Activated CD4-positive, alpha-beta T cell treated with anti-CD3 and anti-CD28 coated beads for 36 hours (primary cell): ENCODE measurements at regions of chr2 and their contacts with region 1.

Region 1: GRCh38 chr2:10122386-10123280 is at the start of gene RRM2:
- DNase-seq: peak; percentile 98
- ATAC-seq: peak; percentile 82
- H3K4me3 Mint-ChIP-seq: peak within 1 kb of the TSS; percentile 97
- H3K27ac Mint-ChIP-seq: peak within 1 kb of the TSS; percentile 98
- H3K4me1 Mint-ChIP-seq: peaks cover 37% of the 10 kb centered on the region
- H3K27me3 Mint-ChIP-seq: no peaks in the 10 kb centered on the region
- total RNA-seq, gene RRM2: 382 to 469 TPM

Region 2: GRCh38 chr2:9630749-9631483 is 491.7 kb before region 1 on chr2 and contains the start of gene YWHAQ:
- CTCF ChIA-PET with region 1: no interaction called
- POLR2A ChIA-PET with region 1: no interaction called
- intact Hi-C with region 1: loop called in 1 of 2 experiments (anchors 1 kb)
- DNase-seq: peak; percentile 97
- ATAC-seq: peak; percentile 89
- H3K4me3 Mint-ChIP-seq: peak within 1 kb of the TSS; percentile 99
- H3K27ac Mint-ChIP-seq: peak within 1 kb of the TSS; percentile 95
- H3K4me1 Mint-ChIP-seq: peaks cover 45% of the 10 kb centered on the region
- H3K27me3 Mint-ChIP-seq: no peaks in the 10 kb centered on the region
- total RNA-seq, gene YWHAQ: 370 to 508 TPM

Region 3: GRCh38 chr2:9951272-9951972 is 171.2 kb before region 1 on chr2 and contains the start of gene GRHL1:
- CTCF ChIA-PET with region 1: no interaction called
- POLR2A ChIA-PET with region 1: no interaction called
- intact Hi-C with region 1: loop called in 1 of 2 experiments (anchors 1 kb)
- DNase-seq: peak; percentile 95
- ATAC-seq: peak; percentile 98
- H3K4me3 Mint-ChIP-seq: peak within 1 kb of the TSS; percentile 68
- H3K27ac Mint-ChIP-seq: no peak within 1 kb of the TSS
- H3K4me1 Mint-ChIP-seq: peaks cover 4% of the 10 kb centered on the region
- H3K27me3 Mint-ChIP-seq: peaks cover 39% of the 10 kb centered on the region
- total RNA-seq, gene GRHL1: 0.27 to 0.53 TPM

Region 4: DNA sequence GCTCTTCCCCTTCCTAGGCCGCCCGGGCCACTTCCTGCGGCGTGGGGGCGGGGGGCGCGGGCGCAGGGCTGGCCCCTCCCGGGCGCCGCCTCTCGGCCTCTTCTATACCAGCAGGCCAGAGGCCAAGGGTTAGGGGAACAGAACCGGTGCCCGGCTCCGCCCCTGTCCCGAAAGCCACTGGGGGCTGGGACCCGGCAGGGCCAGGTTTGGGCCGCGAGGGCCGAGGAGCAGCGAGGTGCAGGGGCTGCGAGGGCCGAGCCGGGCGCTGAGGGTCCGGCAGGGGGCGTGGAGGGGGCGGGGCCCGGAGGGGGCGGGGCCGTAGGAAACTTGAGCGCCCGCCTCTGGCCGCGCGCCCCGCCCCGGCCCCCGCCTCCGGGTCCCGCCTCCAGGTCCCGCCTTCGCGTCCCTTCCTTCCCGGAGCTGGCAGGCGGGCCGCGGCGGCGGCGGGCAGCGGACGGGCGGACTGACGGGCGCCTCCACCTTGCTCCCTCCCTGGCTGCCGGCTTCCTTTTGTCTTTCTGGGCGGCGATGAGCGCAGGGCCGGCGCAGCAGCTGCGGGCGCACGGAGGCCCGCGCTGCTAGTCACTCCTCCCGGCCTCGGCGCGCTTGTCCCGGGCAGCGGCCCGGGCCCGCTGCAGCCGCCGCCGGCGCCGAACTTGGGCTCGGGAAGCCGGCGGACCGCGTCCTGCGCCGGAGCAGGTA is 180.0 kb after region 1 on chr2 and contains the start of gene HPCAL1:
- CTCF ChIA-PET with region 1: interaction called, 4 read pairs
- POLR2A ChIA-PET with region 1: interaction called, 3 read pairs
- intact Hi-C with region 1: loop called (anchors 1 kb)
- DNase-seq: peak; percentile 91
- ATAC-seq: peak; percentile 72
- H3K4me3 Mint-ChIP-seq: peak within 1 kb of the TSS; percentile 100
- H3K27ac Mint-ChIP-seq: peak within 1 kb of the TSS; percentile 89
- H3K4me1 Mint-ChIP-seq: peaks cover 65% of the 10 kb centered on the region
- H3K27me3 Mint-ChIP-seq: no peaks in the 10 kb centered on the region
- total RNA-seq, gene HPCAL1: 109 to 114 TPM

Region 5: GRCh38 chr2:10434886-10435819 is 312.5 kb after region 1 on chr2:
- CTCF ChIA-PET with region 1: interaction called, 22 read pairs
- POLR2A ChIA-PET with region 1: interaction called, 3 read pairs
- intact Hi-C with region 1: loop called in 1 of 2 experiments (anchors 1 kb)
- DNase-seq: peak; percentile 85
- ATAC-seq: peak; percentile 56
- H3K4me3 Mint-ChIP-seq: no peak overlapping the region
- H3K27ac Mint-ChIP-seq: no peak overlapping the region
- H3K4me1 Mint-ChIP-seq: peaks cover 11% of the 10 kb centered on the region
- H3K27me3 Mint-ChIP-seq: peaks cover 6% of the 10 kb centered on the region

Region 6: DNA sequence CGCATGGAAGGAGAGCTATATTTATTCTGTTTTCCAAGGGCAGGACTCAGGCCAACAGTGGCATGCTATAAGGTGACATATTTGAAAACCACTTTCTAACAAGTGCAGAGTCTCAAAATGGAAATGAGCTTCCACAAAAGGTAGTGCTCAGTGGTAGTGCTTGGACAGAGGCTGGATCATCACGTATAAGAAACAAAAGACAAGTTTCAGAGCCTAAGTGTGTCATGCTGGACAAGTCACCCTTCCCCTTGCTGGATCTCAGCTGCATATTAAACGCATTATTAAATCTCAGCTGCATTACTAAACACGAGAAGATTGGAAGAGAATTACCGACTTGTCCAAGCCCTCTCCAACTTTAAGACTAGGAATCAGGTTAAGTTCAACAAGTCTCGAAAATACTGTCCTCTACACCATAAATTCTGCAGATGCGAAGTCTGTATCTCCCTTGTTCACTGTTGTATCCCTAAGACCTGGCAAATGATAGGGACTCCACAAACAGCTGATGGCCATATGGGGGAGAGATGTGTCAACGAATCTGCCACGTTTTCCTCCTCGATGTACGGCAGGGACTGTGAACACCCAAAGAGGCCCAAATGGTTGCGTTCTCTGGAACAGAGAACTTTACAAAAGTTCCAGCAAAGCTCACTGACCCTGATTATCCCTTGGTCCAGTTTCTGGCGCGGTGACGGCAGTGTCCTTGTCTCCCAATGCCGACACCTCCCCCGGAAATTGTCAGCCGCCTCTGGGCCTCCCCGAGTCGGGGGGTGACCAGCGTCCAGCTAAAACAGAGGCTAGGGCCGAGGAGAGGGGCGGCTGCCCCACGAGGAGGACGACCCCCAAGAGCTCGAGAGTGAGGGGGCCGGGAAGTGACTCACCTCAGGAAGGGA is 566.5 kb after region 1 on chr2:
- CTCF ChIA-PET with region 1: no interaction called
- POLR2A ChIA-PET with region 1: no interaction called
- intact Hi-C with region 1: loop called in 1 of 2 experiments (anchors 5 kb)
- DNase-seq: no peak
- ATAC-seq: peak; percentile 19
- H3K4me3 Mint-ChIP-seq: no peak overlapping the region
- H3K27ac Mint-ChIP-seq: no peak overlapping the region
- H3K4me1 Mint-ChIP-seq: peaks cover 7% of the 10 kb centered on the region
- H3K27me3 Mint-ChIP-seq: no peaks in the 10 kb centered on the region